ENCODE measurements at regions of chr1 and their contacts with region 1.

Region 1: GRCh38 chr1:46345281-46345680 is 4.7 kb downstream of the NSUN4 start:
- DNase-seq: no peak
- CTCF ChIP-seq: no peak

Region 2: DNA sequence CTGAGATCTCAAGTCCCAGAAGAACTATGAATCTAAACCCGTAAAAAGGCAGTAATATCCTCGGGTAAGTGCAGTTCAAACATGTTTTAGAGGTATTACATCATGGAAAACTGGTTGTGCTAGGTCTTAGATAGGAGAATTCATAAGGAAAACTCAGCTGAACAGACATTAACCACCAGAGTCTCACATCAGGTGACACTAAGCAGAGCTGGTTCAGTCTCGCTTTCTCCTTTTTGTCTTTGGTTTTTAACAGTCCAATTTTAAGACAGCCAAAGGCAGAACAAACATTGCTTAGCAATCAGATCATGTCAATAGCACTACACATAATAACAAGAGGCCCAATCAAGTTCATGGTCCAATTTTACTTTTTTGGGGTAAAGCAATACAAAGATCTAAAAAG is 942.0 kb before region 1 on chr1:
- in situ Hi-C with region 1: no loop called
- DNase-seq: no peak
- CTCF ChIP-seq: no peak

Region 3: GRCh38 chr1:46303038-46303871 is 42.0 kb before region 1 on chr1 and contains the starts of genes LRRC41 and UQCRH:
- in situ Hi-C with region 1: loop called (anchors 5 kb)
- DNase-seq: peak; percentile 93
- CTCF ChIP-seq: no peak

Measured in GM13976 (cell line).